ENCODE measurements at regions of chr4 and their contacts with region 1.

Region 1: DNA sequence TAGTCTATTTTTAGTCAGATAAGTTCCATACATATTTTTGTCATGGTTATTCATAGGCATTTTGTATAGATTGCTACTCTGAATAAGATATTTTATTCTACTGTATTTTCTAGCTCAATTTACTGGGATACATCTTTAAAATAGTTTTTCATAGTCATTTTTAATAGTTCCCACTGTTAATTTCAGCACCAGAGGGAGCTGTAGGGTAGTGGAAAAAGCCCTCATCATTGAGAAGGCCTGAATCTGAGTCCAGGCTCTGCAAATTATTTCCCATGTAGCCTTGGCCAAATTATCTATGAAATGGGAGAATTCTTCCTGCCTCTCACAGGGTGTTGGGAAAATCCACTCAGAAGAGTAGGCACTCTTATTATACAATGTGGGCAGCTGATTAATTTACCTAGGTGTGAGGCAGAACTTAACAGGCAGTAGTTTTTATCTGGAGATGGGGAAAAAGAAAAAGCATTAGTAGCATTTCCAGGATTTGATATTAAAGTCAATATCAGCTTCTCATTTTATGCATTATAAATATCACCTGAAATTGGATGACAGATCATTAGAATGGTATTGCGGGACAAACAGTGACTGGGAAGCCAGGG is 102.9 kb upstream of the PAQR3 start:
- DNase-seq: peak; percentile 31
- H3K4me3 ChIP-seq: no peak overlapping the region
- H3K27ac ChIP-seq: no peak overlapping the region
- H3K4me1 ChIP-seq: no peaks in the 10 kb centered on the region
- H3K27me3 ChIP-seq: no peaks in the 10 kb centered on the region
- CTCF ChIP-seq: peak in 3 of 4 experiments; percentile 63 to 78 (median 64)
- POLR2A ChIP-seq: no peak

Region 2: DNA sequence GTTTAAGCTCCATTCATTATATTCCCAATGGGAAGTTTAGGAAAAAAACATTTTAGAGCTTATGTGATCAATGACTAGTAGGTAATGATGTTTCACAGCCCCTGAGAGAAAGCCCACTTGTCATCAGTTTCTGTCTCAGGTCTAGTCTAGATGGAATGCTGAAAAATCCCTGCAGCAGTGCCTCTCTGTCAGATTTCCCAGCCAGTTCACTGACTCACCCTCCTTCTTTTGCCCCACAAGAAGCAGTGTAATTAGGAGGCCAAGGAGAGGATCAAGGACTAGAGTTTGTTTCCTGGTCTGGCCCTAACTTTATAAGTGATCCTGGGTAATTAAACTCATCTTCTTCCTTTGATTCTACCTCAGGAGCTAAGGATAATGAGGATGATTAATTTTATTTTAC is 609.3 kb before region 1 on chr4:
- intact Hi-C with region 1: no loop called
- DNase-seq: no peak
- H3K4me3 ChIP-seq: no peak overlapping the region
- H3K27ac ChIP-seq: no peak overlapping the region
- H3K4me1 ChIP-seq: no peaks in the 10 kb centered on the region
- H3K27me3 ChIP-seq: no peaks in the 10 kb centered on the region
- CTCF ChIP-seq: no peak
- POLR2A ChIP-seq: no peak

Region 3: DNA sequence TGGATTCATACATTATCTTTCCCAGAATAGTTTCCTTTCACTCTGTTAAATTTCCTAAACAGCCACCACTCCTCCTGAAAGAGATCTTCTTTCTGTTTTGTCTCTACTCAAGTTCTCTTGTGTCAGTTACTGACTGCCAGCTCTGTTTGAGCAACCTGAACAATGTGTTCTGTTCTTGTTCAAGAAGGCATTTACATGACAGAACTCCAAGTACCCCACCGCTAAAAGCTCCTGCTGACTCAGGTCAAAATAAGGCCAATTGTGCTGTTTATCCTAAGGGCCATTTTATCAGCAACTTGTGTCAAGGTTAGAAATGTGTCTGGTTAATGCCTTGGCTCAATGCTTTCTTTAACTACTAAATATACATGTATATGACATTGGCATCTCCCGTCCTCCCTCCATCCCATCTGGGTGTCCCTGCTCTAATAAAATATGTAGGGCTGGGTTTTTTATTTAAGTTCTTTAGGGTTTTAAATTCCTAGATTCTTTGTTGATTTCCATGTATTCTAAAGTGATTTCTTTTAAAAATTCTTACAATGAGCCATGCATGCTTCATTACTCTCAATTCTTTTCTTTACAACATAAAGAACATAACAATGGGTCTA is 41.3 kb after region 1 on chr4:
- intact Hi-C with region 1: no loop called
- DNase-seq: peak; percentile 78
- H3K4me3 ChIP-seq: peak overlapping the region in 1 of 2 donors; percentile 7
- H3K27ac ChIP-seq: peak overlapping the region; percentile 70 to 79
- H3K4me1 ChIP-seq: no peaks in the 10 kb centered on the region
- H3K27me3 ChIP-seq: no peaks in the 10 kb centered on the region
- CTCF ChIP-seq: no peak
- POLR2A ChIP-seq: no peak

Region 4: DNA sequence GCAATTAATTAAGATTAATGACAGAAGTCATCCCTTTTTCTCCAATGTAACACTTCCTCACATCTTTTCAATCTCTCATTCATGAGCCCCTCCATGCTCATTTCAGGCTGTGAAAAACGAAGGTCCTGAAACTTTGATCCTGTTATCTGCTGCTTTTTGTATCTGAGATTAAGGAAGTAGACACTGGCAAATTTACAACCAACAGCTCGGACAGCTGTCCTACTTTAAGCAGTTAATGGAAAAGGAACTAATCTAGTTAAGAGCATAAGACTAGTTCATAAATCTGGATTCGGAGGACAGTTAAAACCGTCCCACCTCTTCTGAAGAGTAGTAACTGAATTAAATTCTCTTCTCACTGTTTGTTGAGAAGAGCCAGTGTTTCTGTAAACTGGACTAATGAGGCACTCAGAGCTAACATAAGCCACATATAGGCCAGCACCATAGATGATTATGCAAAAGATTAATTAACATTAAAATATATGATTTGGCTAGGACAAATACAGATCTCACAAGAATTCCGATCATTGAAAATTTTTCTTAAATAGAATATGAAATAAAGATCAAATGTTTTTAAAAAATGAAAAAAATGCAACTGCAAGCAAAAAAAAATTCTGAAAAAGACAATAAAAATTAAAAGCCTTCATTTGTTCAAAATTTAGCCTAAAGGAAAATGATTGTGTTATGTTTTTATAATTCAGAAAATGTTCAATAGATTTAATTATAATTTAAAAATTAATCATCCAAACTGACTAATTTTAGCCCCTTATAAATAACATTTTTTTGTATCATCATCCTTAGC is 916.5 kb after region 1 on chr4:
- intact Hi-C with region 1: loop called (anchors 10 kb)
- DNase-seq: no peak
- H3K4me3 ChIP-seq: no peak overlapping the region
- H3K27ac ChIP-seq: peak overlapping the region in 1 of 2 donors; percentile 15
- H3K4me1 ChIP-seq: no peaks in the 10 kb centered on the region
- H3K27me3 ChIP-seq: no peaks in the 10 kb centered on the region
- CTCF ChIP-seq: no peak
- POLR2A ChIP-seq: no peak

Region 5: DNA sequence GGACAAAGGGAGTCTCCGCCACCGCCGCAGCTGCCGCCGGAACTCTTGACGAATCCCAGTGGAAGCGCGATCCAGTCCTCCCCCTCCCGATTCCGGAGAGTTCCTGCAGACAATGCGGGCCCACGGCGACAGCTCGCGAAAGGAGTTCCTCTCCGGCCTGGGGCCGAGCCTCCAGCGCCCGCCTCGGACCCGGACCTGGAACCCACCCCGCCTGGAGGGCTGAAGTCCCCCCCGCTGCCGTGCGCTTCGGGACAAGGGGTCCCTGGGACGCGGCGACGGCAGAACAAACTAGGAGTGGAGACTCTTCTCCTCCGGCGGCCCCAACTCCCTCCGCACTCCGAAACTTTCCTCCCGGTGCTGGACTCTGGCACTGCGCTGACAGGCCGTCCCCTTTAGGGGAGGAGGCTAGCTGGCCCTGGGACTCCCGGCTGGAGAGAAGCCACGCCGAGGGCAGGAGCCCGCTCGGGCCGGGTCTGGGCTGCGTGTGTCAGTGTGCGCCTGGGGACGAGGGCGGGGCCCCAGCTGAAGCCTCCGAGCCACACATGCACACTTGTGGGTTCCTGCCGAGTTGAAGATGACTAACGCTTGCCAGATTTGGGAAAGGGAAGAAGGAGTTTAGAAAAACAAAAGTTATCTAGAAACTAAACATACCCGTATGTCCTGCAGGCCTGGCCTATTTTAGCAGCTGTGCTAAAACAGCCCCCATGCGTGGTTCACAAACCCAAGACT is 1030.7 kb after region 1 on chr4 and contains the start of gene ANTXR2:
- intact Hi-C with region 1: loop called (anchors 5 kb)
- DNase-seq: peak; percentile 83
- H3K4me3 ChIP-seq: peak within 1 kb of the TSS; percentile 87 to 98
- H3K27ac ChIP-seq: peak within 1 kb of the TSS; percentile 93 to 94
- H3K4me1 ChIP-seq: no peaks in the 10 kb centered on the region
- H3K27me3 ChIP-seq: no peaks in the 10 kb centered on the region
- CTCF ChIP-seq: peak in 1 of 4 experiments; percentile 15
- POLR2A ChIP-seq: peak; percentile 57
- total RNA-seq, gene ANTXR2: 86.1 to 133 TPM

Measured in prostate gland (tissue), 2 donors.